Kidney (tissue), 22 donors: ENCODE measurements at regions of chr9 and their contacts with region 1.

Region 1: GRCh38 chr9:69971643-69972449 is 71.8 kb upstream of the MAMDC2 start:
- DNase-seq: peak; percentile 53 to 77 (median 67)
- H3K4me3 ChIP-seq: no peak overlapping the region
- H3K27ac ChIP-seq: no peak overlapping the region
- H3K4me1 ChIP-seq: no peaks in the 10 kb centered on the region
- H3K27me3 ChIP-seq: no peaks in the 10 kb centered on the region
- CTCF ChIP-seq: peak; percentile 77

Region 2: GRCh38 chr9:69871118-69871834 is 100.6 kb before region 1 on chr9:
- intact Hi-C with region 1: no loop called
- DNase-seq: no peak
- H3K4me3 ChIP-seq: no peak overlapping the region
- H3K27ac ChIP-seq: no peak overlapping the region
- H3K4me1 ChIP-seq: no peaks in the 10 kb centered on the region
- H3K27me3 ChIP-seq: no peaks in the 10 kb centered on the region
- CTCF ChIP-seq: no peak

Region 3: GRCh38 chr9:70111042-70111602 is 139.3 kb after region 1 on chr9:
- intact Hi-C with region 1: loop called (anchors 5 kb)
- DNase-seq: peak in 4 of 5 donors; percentile 50 to 67 (median 58)
- H3K4me3 ChIP-seq: no peak overlapping the region
- H3K27ac ChIP-seq: no peak overlapping the region
- H3K4me1 ChIP-seq: no peaks in the 10 kb centered on the region
- H3K27me3 ChIP-seq: no peaks in the 10 kb centered on the region
- CTCF ChIP-seq: peak; percentile 83

Region 4: DNA sequence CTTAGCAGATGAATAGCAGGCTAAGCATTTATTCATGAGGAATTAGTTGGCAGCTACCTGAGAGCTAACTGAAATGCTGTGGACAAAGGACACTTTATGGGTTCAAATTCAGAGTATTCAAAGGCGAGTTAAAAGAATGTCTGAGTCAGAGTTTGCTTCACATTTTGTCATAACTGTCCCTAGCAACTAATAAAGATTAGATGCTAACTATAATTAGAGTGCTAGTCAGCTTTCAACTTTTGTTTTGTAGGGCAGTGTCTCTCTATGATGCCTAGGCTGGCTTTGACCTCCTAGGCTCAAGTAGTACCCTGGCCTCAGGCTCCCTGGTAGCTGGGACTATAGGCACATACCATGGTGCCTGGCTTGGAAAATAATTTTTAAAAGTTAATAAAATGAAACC is 291.6 kb after region 1 on chr9:
- intact Hi-C with region 1: no loop called
- DNase-seq: no peak
- H3K4me3 ChIP-seq: no peak overlapping the region
- H3K27ac ChIP-seq: no peak overlapping the region
- H3K4me1 ChIP-seq: peaks cover 0 to 4% (median 4%) of the 10 kb centered on the region in 3 donors
- H3K27me3 ChIP-seq: no peaks in the 10 kb centered on the region
- CTCF ChIP-seq: no peak